ENCODE measurements at regions of chr20 and their contacts with region 1.

Region 1: DNA sequence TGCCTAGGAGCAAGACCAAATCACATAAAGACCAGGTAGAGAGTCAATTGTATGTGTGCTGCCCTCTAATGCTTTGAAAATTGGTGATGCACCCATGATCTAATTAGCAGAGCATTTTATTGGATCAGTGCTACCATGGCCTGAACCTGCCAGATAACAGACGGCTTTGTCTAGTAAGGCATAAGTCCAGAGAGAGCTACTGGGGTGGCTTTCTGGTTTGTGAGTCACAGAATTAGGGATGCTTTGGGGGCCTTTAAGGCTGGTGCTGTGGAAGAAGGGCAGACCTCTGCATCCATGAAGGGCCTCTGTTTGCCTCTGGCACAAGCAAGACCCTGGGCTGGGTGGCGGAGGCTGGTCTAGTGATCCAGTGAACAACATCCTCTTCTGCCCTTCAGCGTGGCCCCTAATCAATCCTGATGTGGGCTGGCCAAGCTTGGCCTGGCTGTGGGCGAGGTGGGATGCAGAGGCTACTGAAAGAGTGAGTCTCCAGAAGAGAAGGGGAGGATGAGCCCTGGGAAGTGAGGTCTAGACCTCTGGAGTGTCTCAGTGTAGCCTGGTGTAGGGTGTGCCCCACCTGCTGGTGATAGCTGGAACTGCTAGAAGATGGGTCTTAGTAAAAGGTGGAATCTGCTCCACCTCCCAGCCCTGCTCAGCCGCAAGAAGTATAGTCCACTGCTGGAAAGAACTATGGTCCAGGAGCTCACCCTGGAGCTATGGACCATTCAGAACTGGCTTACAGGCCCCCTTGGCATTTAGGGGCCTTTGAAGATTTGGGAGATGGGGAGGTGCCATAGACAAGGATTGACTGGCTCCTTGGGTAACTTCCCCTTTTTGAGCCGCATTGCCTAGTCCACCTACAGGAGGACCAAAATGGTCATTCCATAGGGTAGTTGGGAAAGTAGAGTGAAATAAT is 36.7 kb upstream of the AAR2 start:
- DNase-seq: peak; percentile 92
- H3K4me3 Mint-ChIP-seq: no peak overlapping the region
- H3K27ac Mint-ChIP-seq: no peak overlapping the region
- H3K4me1 Mint-ChIP-seq: peaks cover 5% of the 10 kb centered on the region
- H3K27me3 Mint-ChIP-seq: peaks cover 11% of the 10 kb centered on the region

Region 2: GRCh38 chr20:36113566-36114250 is 85.9 kb before region 1 on chr20:
- intact Hi-C with region 1: no loop called
- DNase-seq: no peak
- H3K4me3 Mint-ChIP-seq: no peak overlapping the region
- H3K27ac Mint-ChIP-seq: no peak overlapping the region
- H3K4me1 Mint-ChIP-seq: no peaks in the 10 kb centered on the region
- H3K27me3 Mint-ChIP-seq: peaks cover 13% of the 10 kb centered on the region

Region 3: GRCh38 chr20:36155991-36156390 is 43.6 kb before region 1 on chr20:
- intact Hi-C with region 1: loop called (anchors 2 kb)
- DNase-seq: no peak
- H3K4me3 Mint-ChIP-seq: no peak overlapping the region
- H3K27ac Mint-ChIP-seq: no peak overlapping the region
- H3K4me1 Mint-ChIP-seq: peaks cover 3% of the 10 kb centered on the region
- H3K27me3 Mint-ChIP-seq: peaks cover 46% of the 10 kb centered on the region

Measured in activated CD4-positive, alpha-beta T cell treated with anti-CD3 and anti-CD28 coated beads, Interleukin-2, amount 10 ng/mL, durations not matched to agents 24 days and 14 days (primary cell).